CD8-positive, alpha-beta T cell (primary cell): ENCODE measurements at regions of chr4 and their contacts with region 1.

Region 1: GRCh38 chr4:3106339-3107186 is 32.1 kb downstream of the HTT start:
- DNase-seq: peak; percentile 63 to 89 (median 85)
- ATAC-seq: peak; percentile 100
- H3K4me3 ChIP-seq: no peak overlapping the region
- H3K4me3 Mint-ChIP-seq: no peak overlapping the region
- H3K27ac ChIP-seq: no peak overlapping the region
- H3K27ac Mint-ChIP-seq: peak overlapping the region; percentile 49
- H3K4me1 ChIP-seq: peaks cover 3% of the 10 kb centered on the region
- H3K4me1 Mint-ChIP-seq: peaks cover 8% of the 10 kb centered on the region
- H3K27me3 ChIP-seq: no peaks in the 10 kb centered on the region
- H3K27me3 Mint-ChIP-seq: no peaks in the 10 kb centered on the region
- CTCF ChIP-seq: peak; percentile 98

Region 2: DNA sequence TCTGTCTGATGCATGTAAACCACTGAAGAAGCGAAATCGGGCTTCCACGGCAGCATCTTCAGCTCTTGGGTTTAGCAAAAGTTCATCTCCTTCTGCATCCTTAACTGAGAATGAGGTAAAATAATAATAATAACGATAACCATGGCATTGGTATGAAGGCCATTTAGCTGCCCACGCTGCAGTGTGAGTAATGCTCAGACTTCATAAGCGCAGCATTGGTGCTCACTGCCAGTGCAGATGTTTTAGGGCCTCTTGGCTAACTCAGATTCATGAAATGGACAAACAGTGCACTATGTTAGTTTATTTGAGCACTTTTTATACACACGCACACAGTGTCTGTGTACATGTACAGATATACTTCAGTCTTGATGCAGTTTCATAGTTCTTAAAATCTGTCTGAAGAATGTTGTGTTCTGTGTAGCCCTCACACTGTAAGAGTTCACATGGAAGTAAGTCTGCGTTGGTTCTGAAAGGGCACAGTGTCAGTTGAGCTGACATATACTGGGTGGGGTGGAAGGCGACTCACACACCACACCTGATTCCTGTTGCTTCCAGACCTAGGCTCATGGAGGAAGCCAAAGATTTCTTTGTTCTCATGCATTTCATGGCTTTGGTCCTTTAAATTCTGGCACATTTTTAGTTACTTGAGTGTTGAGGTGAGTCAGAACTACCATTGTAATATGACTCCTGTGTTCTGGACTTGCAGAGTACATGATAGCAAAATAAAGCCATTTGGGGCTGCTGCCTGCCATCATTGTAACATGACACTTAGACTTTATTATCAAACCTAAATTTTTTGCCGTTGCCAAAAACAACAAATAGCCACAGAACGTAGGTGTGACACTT is 1166.7 kb before region 1 on chr4:
- CTCF ChIA-PET with region 1: no interaction called
- POLR2A ChIA-PET with region 1: no interaction called
- intact Hi-C with region 1: no loop called
- DNase-seq: no peak
- ATAC-seq: no peak
- H3K4me3 ChIP-seq: no peak overlapping the region
- H3K4me3 Mint-ChIP-seq: no peak overlapping the region
- H3K27ac ChIP-seq: no peak overlapping the region
- H3K27ac Mint-ChIP-seq: no peak overlapping the region
- H3K4me1 ChIP-seq: no peaks in the 10 kb centered on the region
- H3K4me1 Mint-ChIP-seq: no peaks in the 10 kb centered on the region
- H3K27me3 ChIP-seq: no peaks in the 10 kb centered on the region
- H3K27me3 Mint-ChIP-seq: no peaks in the 10 kb centered on the region
- CTCF ChIP-seq: no peak

Region 3: DNA sequence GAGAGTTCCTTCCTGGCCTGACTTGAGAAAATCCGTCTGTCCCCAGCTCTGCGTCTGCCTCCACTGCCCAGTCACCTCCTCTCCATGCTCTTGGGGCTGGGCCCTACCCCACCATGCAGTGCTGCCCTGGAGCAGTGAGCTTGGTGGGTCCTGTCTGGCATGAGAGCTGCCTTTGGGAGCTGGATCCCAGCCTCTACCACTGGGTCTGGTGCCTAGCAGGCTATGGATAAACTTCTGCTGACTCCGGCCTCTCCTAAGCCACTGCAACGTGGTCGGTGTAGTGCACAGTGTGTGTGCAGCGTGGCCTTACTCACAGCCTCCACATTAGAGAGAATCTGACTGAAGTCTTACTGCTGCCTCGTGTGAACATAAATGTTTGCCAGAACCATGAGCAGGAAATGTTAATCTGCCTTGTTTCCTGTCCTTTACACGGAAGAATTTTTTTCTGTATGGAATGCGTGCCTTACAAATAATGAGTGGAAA is 15.6 kb after region 1 on chr4:
- CTCF ChIA-PET with region 1: interaction called, 12 read pairs
- POLR2A ChIA-PET with region 1: no interaction called
- intact Hi-C with region 1: no loop called
- DNase-seq: no peak
- ATAC-seq: no peak
- H3K4me3 ChIP-seq: no peak overlapping the region
- H3K4me3 Mint-ChIP-seq: no peak overlapping the region
- H3K27ac ChIP-seq: no peak overlapping the region
- H3K27ac Mint-ChIP-seq: peak overlapping the region; percentile 19
- H3K4me1 ChIP-seq: peaks cover 5% of the 10 kb centered on the region
- H3K4me1 Mint-ChIP-seq: peaks cover 5% of the 10 kb centered on the region
- H3K27me3 ChIP-seq: no peaks in the 10 kb centered on the region
- H3K27me3 Mint-ChIP-seq: no peaks in the 10 kb centered on the region
- CTCF ChIP-seq: no peak

Region 4: DNA sequence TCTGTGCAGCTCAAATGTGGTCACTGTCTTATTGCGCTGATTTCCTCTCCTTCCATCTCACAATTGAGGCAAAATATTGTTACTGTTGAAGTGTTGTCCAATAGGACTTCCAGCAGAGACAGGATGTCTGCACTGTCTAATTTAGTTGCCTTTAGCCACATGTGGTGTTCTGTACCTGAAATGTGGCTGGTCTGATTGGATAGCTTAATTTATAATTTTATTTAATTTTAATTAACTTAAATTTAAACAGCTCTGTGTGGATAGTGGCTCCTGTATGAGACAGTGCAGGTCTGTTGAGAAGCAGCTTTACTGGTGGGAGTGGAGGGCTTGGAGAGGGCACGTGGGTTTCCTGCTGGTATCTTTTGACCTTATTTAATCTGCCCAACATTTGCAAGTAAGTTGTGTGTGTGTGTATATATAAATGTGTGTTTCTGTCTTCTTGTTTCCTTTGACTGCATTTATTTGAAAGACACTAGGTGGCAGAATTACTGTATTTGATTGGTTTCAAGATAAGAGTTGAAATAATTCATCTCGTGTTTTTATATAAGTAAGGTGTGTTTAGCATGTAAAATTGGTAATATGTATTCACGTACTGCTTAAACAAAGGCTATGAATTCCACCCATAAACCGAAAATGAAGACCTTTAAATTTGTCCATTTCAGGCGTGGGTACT is 87.1 kb after region 1 on chr4:
- CTCF ChIA-PET with region 1: interaction called, 6 read pairs
- POLR2A ChIA-PET with region 1: no interaction called
- intact Hi-C with region 1: loop called in 1 of 2 experiments (anchors 1 kb)
- DNase-seq: peak in 3 of 9 experiments; percentile 37 to 61 (median 38)
- ATAC-seq: peak; percentile 27
- H3K4me3 ChIP-seq: no peak overlapping the region
- H3K4me3 Mint-ChIP-seq: no peak overlapping the region
- H3K27ac ChIP-seq: peak overlapping the region in 1 of 2 experiments; percentile 91
- H3K27ac Mint-ChIP-seq: no peak overlapping the region
- H3K4me1 ChIP-seq: peaks cover 49% of the 10 kb centered on the region
- H3K4me1 Mint-ChIP-seq: peaks cover 68% of the 10 kb centered on the region
- H3K27me3 ChIP-seq: no peaks in the 10 kb centered on the region
- H3K27me3 Mint-ChIP-seq: no peaks in the 10 kb centered on the region
- CTCF ChIP-seq: peak; percentile 70

Region 5: DNA sequence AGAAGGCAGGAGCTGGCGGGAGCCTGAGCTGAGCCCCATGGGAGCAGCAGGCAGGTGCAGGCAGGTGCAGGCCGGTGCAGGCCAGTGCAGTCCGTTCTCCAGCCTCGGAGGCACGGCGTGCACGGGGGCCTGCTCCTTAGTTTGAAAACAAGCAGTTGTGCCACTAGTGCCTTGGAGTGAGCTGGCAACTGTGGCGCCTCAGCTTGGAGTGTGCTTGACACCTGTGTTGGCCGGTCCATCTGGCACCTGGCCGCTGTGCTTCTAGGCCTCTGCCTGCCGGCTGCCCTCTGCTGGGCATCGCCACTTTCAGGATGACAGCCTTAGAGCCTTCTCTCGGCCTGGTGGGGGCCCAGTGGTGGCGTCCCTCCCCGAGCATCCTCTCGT is 234.1 kb after region 1 on chr4:
- CTCF ChIA-PET with region 1: no interaction called
- POLR2A ChIA-PET with region 1: no interaction called
- intact Hi-C with region 1: no loop called
- DNase-seq: peak in 1 of 9 experiments; percentile 42
- ATAC-seq: no peak
- H3K4me3 ChIP-seq: no peak overlapping the region
- H3K4me3 Mint-ChIP-seq: no peak overlapping the region
- H3K27ac ChIP-seq: no peak overlapping the region
- H3K27ac Mint-ChIP-seq: no peak overlapping the region
- H3K4me1 ChIP-seq: peaks cover 12% of the 10 kb centered on the region
- H3K4me1 Mint-ChIP-seq: peaks cover 18% of the 10 kb centered on the region
- H3K27me3 ChIP-seq: no peaks in the 10 kb centered on the region
- H3K27me3 Mint-ChIP-seq: peaks cover 6% of the 10 kb centered on the region
- CTCF ChIP-seq: no peak

Region 6: DNA sequence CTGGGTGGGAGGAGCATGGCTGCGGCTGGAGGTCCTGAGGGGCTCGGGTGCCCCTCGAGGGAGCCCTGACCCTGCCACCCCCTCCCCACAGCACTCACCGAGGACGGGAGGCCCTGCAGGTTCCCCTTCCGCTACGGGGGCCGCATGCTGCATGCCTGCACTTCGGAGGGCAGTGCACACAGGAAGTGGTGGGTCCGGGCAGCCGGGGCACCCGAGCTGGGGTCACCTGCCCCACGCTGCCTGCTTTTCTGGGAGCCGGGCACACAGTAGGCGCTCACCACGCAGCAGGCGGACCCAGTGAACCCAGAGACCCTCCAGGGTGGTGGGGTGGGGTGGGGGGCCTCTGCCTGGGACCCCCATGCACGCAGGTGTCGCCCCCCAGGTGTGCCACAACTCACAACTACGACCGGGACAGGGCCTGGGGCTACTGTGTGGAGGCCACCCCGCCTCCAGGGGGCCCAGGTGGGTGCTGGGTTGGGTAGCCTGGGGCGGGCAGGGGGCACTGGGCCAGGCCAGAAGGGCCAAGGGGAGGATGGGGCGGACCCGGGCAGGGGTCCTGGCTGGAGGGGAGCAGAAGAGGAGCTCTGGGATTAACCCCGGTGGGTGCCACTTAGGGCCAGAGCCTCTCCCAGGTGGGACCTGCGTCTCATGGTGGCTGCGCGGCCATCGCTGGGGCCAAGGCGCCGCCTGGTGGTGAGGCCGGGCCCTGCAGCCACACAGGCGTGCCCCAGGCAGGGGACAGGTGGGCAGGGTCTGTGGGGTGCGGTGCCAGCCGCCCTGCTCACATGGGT is 336.6 kb after region 1 on chr4:
- CTCF ChIA-PET with region 1: interaction called, 8 read pairs
- POLR2A ChIA-PET with region 1: no interaction called
- intact Hi-C with region 1: loop called in 1 of 2 experiments (anchors 1 kb)
- DNase-seq: peak; percentile 46 to 83 (median 64)
- ATAC-seq: peak; percentile 91
- H3K4me3 ChIP-seq: no peak overlapping the region
- H3K4me3 Mint-ChIP-seq: no peak overlapping the region
- H3K27ac ChIP-seq: no peak overlapping the region
- H3K27ac Mint-ChIP-seq: no peak overlapping the region
- H3K4me1 ChIP-seq: no peaks in the 10 kb centered on the region
- H3K4me1 Mint-ChIP-seq: no peaks in the 10 kb centered on the region
- H3K27me3 ChIP-seq: no peaks in the 10 kb centered on the region
- H3K27me3 Mint-ChIP-seq: no peaks in the 10 kb centered on the region
- CTCF ChIP-seq: peak; percentile 89

Region 7: GRCh38 chr4:3880615-3881120 is 774.1 kb after region 1 on chr4:
- CTCF ChIA-PET with region 1: interaction called, 10 read pairs
- POLR2A ChIA-PET with region 1: no interaction called
- intact Hi-C with region 1: loop called in 1 of 2 experiments (anchors 1 kb)
- DNase-seq: peak; percentile 45 to 83 (median 68)
- ATAC-seq: peak; percentile 78
- H3K4me3 ChIP-seq: peak overlapping the region; percentile 24 to 28
- H3K4me3 Mint-ChIP-seq: peak overlapping the region; percentile 56
- H3K27ac ChIP-seq: no peak overlapping the region
- H3K27ac Mint-ChIP-seq: no peak overlapping the region
- H3K4me1 ChIP-seq: peaks cover 15% of the 10 kb centered on the region
- H3K4me1 Mint-ChIP-seq: peaks cover 17% of the 10 kb centered on the region
- H3K27me3 ChIP-seq: no peaks in the 10 kb centered on the region
- H3K27me3 Mint-ChIP-seq: peaks cover 42% of the 10 kb centered on the region
- CTCF ChIP-seq: peak; percentile 59